Mammary epithelial cell (primary cell): ENCODE measurements at regions of chr19 and their contacts with region 1.

Region 1: GRCh38 chr19:662962-663681 is at the start of gene RNF126:
- DNase-seq: peak; percentile 87
- H3K4me3 ChIP-seq: peak within 1 kb of the TSS; percentile 63 to 90 (median 71)
- H3K27ac ChIP-seq: peak within 1 kb of the TSS; percentile 71
- H3K4me1 ChIP-seq: peaks cover 45% of the 10 kb centered on the region
- H3K27me3 ChIP-seq: no peaks in the 10 kb centered on the region
- CTCF ChIP-seq: no peak
- total RNA-seq, gene RNF126: 79.2 to 83.9 TPM

Region 2: DNA sequence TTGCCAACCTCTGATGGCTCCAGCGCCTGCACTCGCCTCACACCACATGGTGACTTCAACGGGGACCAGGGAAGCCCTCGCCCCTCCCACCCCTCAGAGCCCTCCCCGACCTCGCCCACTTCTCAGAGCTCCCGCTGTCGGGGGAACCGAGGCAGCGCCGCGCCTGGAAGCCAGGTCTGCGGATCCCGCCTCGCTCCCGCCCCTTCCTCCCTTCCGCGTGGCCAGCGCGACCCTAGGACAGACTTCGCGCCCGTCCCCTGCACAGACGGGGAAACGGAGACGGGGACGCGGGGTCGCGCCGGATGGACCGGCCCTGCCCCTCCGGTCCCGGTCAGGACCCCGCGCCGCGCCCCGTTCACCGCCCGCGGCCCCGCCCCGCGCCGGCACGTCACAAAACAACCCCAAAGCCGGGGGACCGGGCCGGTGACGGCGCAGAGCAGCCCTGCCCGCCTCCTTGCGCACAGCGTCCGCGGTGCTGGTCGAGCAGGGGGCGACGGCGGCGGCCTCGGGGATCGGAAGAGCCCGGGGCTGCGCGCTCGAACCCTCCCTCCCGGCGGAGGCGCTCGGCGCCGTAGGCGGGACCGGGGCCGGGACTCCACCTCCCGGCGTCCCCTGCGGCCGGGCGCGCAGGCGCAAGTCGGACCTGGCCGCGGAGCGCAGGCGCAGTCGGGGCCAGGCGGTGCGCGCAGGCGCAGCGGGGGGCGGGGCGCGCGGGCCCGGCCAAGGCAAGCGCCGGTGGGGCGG is 131.9 kb before region 1 on chr19:
- CTCF ChIA-PET with region 1: no interaction called
- dilution Hi-C with region 1: no loop called
- in situ Hi-C with region 1: no loop called
- intact Hi-C with region 1: loop called (anchors 2 kb)
- DNase-seq: peak; percentile 73
- H3K4me3 ChIP-seq: peak overlapping the region; percentile 71 to 94 (median 85)
- H3K27ac ChIP-seq: peak overlapping the region; percentile 60
- H3K4me1 ChIP-seq: peaks cover 29% of the 10 kb centered on the region
- H3K27me3 ChIP-seq: no peaks in the 10 kb centered on the region
- CTCF ChIP-seq: peak in 1 of 2 donors; percentile 10

Region 3: DNA sequence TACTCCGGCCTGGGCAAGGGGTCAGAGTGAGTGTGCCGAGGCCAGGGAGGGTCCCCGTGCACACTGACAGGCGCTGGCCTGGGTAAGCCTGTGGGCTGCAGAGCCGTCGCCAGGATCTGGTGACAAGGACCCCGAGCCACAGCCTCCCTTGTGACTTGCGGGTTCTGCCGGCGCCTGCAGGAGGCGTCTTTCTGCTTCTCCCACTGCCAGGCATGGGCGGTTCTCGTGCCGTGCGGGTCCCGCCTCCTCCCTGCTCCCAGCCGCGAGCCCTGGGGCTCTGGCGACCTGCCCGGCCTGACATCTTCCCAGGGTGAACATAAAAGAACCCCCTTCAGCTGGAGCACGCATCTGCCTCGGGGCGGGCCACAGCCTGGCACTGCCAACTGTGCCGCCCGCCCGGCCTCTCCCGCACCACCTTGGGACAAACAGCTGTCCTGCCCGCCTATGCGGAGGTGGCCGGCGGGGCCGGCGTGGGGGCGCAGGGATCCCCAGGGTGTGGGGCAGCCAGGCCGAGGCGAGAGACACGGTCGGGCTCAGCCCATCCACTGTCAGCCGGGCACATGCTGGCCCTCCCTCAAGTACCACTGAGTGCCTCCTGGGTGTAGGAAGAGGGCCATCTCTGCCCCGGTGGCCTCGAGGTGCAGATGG is 74.9 kb before region 1 on chr19:
- CTCF ChIA-PET with region 1: interaction called, 10 read pairs
- dilution Hi-C with region 1: no loop called
- in situ Hi-C with region 1: no loop called
- intact Hi-C with region 1: loop called (anchors 2 kb)
- DNase-seq: peak; percentile 75
- H3K4me3 ChIP-seq: no peak overlapping the region
- H3K27ac ChIP-seq: no peak overlapping the region
- H3K4me1 ChIP-seq: peaks cover 17% of the 10 kb centered on the region
- H3K27me3 ChIP-seq: peaks cover 14% of the 10 kb centered on the region
- CTCF ChIP-seq: peak; percentile 44 to 75

Region 4: DNA sequence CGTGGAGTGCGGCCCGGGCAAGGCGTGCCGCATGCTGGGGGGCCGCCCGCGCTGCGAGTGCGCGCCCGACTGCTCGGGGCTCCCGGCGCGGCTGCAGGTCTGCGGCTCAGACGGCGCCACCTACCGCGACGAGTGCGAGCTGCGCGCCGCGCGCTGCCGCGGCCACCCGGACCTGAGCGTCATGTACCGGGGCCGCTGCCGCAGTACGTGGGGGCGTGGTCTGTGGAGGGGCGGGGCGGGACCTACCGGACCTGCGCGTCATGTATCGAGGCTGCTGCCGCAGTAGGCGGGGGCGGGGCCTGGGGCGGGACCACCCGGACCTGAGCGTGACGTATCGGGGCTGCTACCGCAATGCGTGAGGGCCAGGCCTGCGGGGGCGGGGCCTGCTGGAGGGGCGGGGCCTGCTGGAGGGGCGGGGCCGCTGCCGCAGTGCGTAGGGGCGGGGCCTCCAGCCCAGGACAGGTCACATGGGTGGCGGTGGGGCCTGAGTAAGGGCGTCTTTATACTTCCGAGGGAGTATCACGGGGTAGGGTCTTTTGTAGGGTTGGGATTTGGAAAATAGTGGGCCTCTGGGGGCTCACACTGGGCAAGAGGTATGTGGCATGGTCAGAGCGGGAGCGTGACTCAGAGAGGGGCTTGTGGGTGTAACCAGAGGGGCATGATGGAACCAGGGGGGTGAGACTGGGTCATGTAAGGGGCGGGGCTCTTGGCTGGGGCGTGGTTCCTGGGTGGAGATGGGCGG is 17.3 kb after region 1 on chr19:
- CTCF ChIA-PET with region 1: no interaction called
- dilution Hi-C with region 1: no loop called
- in situ Hi-C with region 1: no loop called
- intact Hi-C with region 1: loop called (anchors 1 kb)
- DNase-seq: peak; percentile 96
- H3K4me3 ChIP-seq: peak overlapping the region; percentile 36 to 68 (median 54)
- H3K27ac ChIP-seq: peak overlapping the region; percentile 63
- H3K4me1 ChIP-seq: peaks cover 33% of the 10 kb centered on the region
- H3K27me3 ChIP-seq: no peaks in the 10 kb centered on the region
- CTCF ChIP-seq: peak; percentile 17 to 49

Region 5: GRCh38 chr19:737581-738093 is 74.5 kb after region 1 on chr19:
- CTCF ChIA-PET with region 1: interaction called, 4 read pairs
- dilution Hi-C with region 1: loop called (anchors 10 kb)
- in situ Hi-C with region 1: loop called (anchors 5 kb)
- intact Hi-C with region 1: loop called (anchors 1 kb)
- DNase-seq: no peak
- H3K4me3 ChIP-seq: no peak overlapping the region
- H3K27ac ChIP-seq: no peak overlapping the region
- H3K4me1 ChIP-seq: no peaks in the 10 kb centered on the region
- H3K27me3 ChIP-seq: no peaks in the 10 kb centered on the region
- CTCF ChIP-seq: peak; percentile 47 to 63